ENCODE measurements at regions of chr3 and their contacts with region 1.

Region 1: GRCh38 chr3:134485718-134486576 is at the starts of genes ANAPC13 and CEP63:
- DNase-seq: peak; percentile 95 to 98 (median 96)
- H3K4me3 ChIP-seq: peak within 1 kb of the TSS; percentile 92 to 95
- H3K4me3 Mint-ChIP-seq: peak within 1 kb of the TSS; percentile 94 to 100 (median 99)
- H3K27ac ChIP-seq: peak within 1 kb of the TSS; percentile 88
- H3K27ac Mint-ChIP-seq: peak within 1 kb of the TSS; percentile 97 to 100 (median 99)
- H3K4me1 ChIP-seq: peaks cover 31% of the 10 kb centered on the region
- H3K4me1 Mint-ChIP-seq: peaks cover 29 to 64% (median 45%) of the 10 kb centered on the region in 4 donors
- H3K27me3 ChIP-seq: no peaks in the 10 kb centered on the region
- H3K27me3 Mint-ChIP-seq: no peaks in the 10 kb centered on the region
- total RNA-seq, gene ANAPC13: 40.9 to 41.1 TPM
- total RNA-seq, gene CEP63: 31.6 to 40.1 TPM

Region 2: DNA sequence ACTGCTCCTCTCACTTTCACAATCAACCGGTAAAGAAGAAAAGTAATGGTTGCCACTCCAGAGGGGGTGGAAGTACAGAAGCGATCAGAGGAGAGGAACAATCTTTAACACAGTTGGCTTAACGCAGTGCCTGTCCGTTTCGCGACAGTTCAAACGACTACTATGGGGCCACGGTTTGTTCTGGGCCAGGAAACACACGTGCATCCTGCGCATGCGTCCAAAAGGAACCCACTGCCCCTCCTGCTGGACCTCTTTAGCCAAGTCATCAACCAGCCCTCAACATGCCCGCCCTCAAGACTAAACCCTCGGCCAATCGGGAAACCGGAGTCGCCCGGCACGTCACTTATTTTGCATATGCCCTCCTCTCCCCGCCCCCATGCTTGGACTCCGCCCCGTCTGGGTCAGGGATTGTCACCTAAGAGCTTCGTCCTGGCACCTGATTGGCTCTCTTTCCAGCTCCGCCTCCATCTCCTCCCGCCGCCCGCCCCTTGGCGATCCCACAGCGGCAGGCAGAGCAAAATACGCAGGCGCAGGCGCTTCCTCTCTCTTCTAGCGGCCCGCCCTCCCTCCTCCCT is 912.8 kb before region 1 on chr3:
- CTCF ChIA-PET with region 1: interaction called, 3 read pairs
- POLR2A ChIA-PET with region 1: interaction called, 16 read pairs
- intact Hi-C with region 1: loop called (anchors 1 kb)
- DNase-seq: peak; percentile 100
- H3K4me3 ChIP-seq: peak overlapping the region; percentile 27 to 59
- H3K4me3 Mint-ChIP-seq: peak overlapping the region; percentile 79 to 92 (median 87)
- H3K27ac ChIP-seq: peak overlapping the region; percentile 90
- H3K27ac Mint-ChIP-seq: peak overlapping the region; percentile 97 to 99 (median 98)
- H3K4me1 ChIP-seq: peaks cover 46% of the 10 kb centered on the region
- H3K4me1 Mint-ChIP-seq: peaks cover 37 to 58% (median 47%) of the 10 kb centered on the region in 4 donors
- H3K27me3 ChIP-seq: no peaks in the 10 kb centered on the region
- H3K27me3 Mint-ChIP-seq: no peaks in the 10 kb centered on the region

Region 3: DNA sequence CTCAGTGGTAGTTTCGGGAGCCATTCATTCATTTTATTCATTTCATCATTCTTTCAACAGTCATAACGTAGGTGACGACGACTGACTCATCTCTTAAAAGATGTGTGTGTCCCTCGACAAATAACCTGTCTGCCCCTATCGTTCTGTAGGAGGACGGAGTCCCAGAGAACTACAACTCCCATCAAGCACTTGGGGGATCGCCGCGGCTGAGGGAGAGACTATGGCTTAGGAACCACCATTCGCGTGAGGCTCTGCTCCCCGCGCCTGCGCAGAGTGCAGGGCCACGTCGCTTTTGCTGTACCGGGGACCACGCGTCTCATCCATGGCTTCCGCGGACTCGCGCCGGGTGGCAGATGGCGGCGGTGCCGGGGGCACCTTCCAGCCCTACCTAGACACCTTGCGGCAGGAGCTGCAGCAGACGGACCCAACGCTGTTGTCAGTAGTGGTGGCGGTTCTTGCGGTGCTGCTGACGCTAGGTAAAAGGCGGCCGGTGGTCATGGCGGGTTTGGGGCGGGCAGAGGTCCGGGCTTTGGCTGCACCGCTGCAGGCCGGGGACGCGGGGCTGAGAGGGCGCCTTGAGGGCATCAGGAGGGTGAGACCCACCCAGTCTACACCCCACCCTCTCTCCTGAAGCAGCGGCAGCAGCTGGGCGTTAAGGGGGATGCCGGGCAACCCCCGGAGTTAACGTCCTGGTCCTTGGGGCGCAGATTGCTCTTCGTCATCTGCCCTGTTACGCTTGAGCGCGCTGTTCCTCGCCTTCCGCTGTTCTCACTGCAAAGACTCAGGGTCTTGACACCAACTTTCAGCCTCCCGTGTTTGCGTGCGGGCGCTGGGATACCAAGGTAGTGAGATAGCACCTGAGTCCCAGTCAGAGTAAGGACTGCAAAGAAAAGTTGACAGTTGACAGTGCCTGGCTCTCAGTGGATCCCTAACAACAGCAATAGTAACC is 680.1 kb before region 1 on chr3 and contains the start of gene SRPRB:
- CTCF ChIA-PET with region 1: no interaction called
- POLR2A ChIA-PET with region 1: interaction called, 3 read pairs
- intact Hi-C with region 1: loop called (anchors 5 kb)
- DNase-seq: peak; percentile 93 to 98 (median 96)
- H3K4me3 ChIP-seq: peak within 1 kb of the TSS; percentile 57 to 85
- H3K4me3 Mint-ChIP-seq: peak within 1 kb of the TSS; percentile 94 to 98 (median 98)
- H3K27ac ChIP-seq: peak within 1 kb of the TSS; percentile 65
- H3K27ac Mint-ChIP-seq: peak within 1 kb of the TSS; percentile 92 to 98 (median 95)
- H3K4me1 ChIP-seq: peaks cover 29% of the 10 kb centered on the region
- H3K4me1 Mint-ChIP-seq: peaks cover 20 to 46% (median 29%) of the 10 kb centered on the region in 4 donors
- H3K27me3 ChIP-seq: no peaks in the 10 kb centered on the region
- H3K27me3 Mint-ChIP-seq: peaks cover 0 to 5% of the 10 kb centered on the region in 2 donors
- total RNA-seq, gene SRPRB: 45.6 to 49.8 TPM

Region 4: GRCh38 chr3:134250717-134251220 is 235.2 kb before region 1 on chr3 and contains the start of gene RYK:
- CTCF ChIA-PET with region 1: interaction called, 3 read pairs
- POLR2A ChIA-PET with region 1: interaction called, 28 read pairs
- intact Hi-C with region 1: loop called (anchors 1 kb)
- DNase-seq: peak; percentile 72 to 84 (median 78)
- H3K4me3 ChIP-seq: peak within 1 kb of the TSS; percentile 43 to 73
- H3K4me3 Mint-ChIP-seq: peak within 1 kb of the TSS; percentile 93 to 98 (median 94)
- H3K27ac ChIP-seq: peak within 1 kb of the TSS; percentile 66
- H3K27ac Mint-ChIP-seq: peak within 1 kb of the TSS; percentile 89 to 97 (median 95)
- H3K4me1 ChIP-seq: peaks cover 44% of the 10 kb centered on the region
- H3K4me1 Mint-ChIP-seq: peaks cover 35 to 70% (median 51%) of the 10 kb centered on the region in 4 donors
- H3K27me3 ChIP-seq: no peaks in the 10 kb centered on the region
- H3K27me3 Mint-ChIP-seq: no peaks in the 10 kb centered on the region
- total RNA-seq, gene RYK: 44.7 to 47.9 TPM

Region 5: DNA sequence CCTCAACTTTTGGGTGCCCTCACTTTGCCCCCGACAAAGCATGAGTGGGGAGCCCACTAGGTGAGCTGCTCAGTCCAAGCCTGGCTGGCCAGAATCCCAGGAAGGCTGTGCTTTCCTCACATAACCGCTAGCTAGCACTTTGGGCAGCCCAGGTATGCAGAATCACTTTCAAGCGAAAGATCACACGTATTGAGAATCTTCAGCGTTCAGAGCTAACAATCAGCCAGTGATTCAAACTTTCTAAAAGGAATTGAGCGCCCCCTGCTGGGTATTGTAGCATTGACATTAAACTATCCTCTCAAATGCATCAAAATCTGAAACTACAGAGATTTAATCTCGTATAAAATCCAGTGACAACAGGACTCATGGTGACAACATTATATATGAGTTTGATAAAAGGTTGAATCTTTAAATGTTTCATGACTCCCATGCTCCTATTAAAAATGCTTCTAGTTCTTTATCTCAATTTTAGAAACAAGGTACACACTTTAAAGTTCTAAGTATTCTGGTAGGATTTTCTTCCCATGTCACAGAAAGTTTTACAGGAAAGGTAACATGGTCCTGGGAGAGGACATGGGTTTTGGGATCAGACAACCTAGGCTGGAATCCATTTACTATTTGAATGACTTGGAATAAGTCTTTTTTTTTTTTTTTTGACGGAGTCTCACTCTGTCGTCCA is 11.9 kb before region 1 on chr3:
- CTCF ChIA-PET with region 1: interaction called, 79 read pairs
- POLR2A ChIA-PET with region 1: interaction called, 31 read pairs
- intact Hi-C with region 1: no loop called
- DNase-seq: peak; percentile 67 to 80 (median 72)
- H3K4me3 ChIP-seq: no peak overlapping the region
- H3K4me3 Mint-ChIP-seq: no peak overlapping the region
- H3K27ac ChIP-seq: no peak overlapping the region
- H3K27ac Mint-ChIP-seq: peak overlapping the region in 2 of 7 donors; percentile 8 to 80
- H3K4me1 ChIP-seq: no peaks in the 10 kb centered on the region
- H3K4me1 Mint-ChIP-seq: peaks cover 0 to 5% (median 3%) of the 10 kb centered on the region in 4 donors
- H3K27me3 ChIP-seq: no peaks in the 10 kb centered on the region
- H3K27me3 Mint-ChIP-seq: no peaks in the 10 kb centered on the region

Measured in CD4-positive, alpha-beta memory T cell (primary cell).